ENCODE measurements at regions of chr22 and their contacts with region 1.

Region 1: DNA sequence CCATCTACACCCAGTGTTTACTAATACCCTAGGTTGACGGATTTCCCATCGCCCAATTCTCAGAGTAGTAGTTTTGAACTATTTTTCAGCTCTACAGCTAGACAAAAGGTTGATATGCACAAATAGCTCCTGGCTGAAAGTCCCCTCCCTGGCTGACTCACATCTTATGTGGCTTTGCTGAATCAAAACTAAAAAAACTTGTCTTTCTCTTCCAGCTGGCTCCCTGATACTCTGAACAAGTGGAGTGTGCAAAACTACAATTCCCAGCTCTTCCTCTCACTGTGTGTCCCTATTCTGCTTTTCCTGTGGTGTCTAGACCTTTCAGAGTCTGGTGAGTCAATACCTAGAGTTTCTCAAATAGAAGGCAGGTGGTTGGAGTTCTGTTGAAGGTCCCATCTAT is 12.7 kb upstream of the LARGE1 start:
- ATAC-seq: peak in 2 of 8 experiments; percentile 20 to 75
- H3K4me3 ChIP-seq: no peak overlapping the region
- H3K27ac ChIP-seq: no peak overlapping the region
- H3K4me1 ChIP-seq: no peaks in the 10 kb centered on the region

Region 2: GRCh38 chr22:33743756-33744155 is 189.2 kb before region 1 on chr22:
- in situ Hi-C with region 1: no loop called
- ATAC-seq: no peak
- H3K4me3 ChIP-seq: no peak overlapping the region
- H3K27ac ChIP-seq: no peak overlapping the region
- H3K4me1 ChIP-seq: peaks cover 32 to 48% of the 10 kb centered on the region in 2 donors

Region 3: GRCh38 chr22:34093646-34094045 is 160.6 kb after region 1 on chr22:
- in situ Hi-C with region 1: no loop called
- ATAC-seq: no peak
- H3K4me3 ChIP-seq: no peak overlapping the region
- H3K27ac ChIP-seq: no peak overlapping the region
- H3K4me1 ChIP-seq: peaks cover 0 to 10% of the 10 kb centered on the region in 2 donors

Region 4: DNA sequence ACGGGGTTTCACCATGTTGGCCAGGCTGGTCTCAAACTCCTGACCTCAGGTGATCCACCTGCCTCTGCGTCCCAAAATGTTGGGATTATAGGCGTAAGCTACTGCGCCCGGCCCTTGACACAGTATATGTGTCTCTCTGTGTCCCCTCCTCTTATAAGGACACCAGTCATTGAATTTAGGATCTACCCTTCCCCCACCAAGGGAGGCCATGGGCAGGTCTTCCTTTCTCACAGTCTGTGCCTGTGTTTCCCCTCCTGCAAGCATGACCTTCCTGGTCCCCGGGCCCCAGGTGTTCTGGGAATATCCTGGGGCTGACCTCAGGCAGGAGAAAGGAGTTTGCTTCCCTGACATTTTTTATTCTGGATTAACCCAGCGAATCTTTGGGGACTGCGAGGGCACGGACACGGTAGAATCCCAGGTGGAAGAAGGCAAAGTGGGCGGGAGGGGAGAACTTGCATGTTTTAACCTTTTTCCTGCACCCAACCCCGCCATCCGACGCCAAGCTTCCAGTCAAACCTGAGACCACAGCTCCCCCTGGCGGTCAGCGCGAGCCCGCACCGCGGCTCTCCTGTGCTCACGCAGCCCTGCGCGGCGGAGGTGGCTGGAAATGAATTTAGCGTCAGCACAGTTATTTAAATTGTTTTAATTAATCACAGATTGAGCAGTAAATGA is 1090.8 kb after region 1 on chr22:
- in situ Hi-C with region 1: loop called in 1 of 9 experiments (anchors 25 kb)
- ATAC-seq: peak; percentile 69 to 95 (median 87)
- H3K4me3 ChIP-seq: no peak overlapping the region
- H3K27ac ChIP-seq: no peak overlapping the region
- H3K4me1 ChIP-seq: no peaks in the 10 kb centered on the region

Measured in motor neuron (in vitro differentiated cells).